ENCODE measurements at regions of chr2 and their contacts with region 1.

Region 1: GRCh38 chr2:68467077-68467960 is at the starts of genes APLF and FBXO48:
- DNase-seq: peak; percentile 90 to 99 (median 99)
- ATAC-seq: peak; percentile 94
- H3K4me3 ChIP-seq: peak within 1 kb of the TSS; percentile 99
- H3K4me3 Mint-ChIP-seq: peak within 1 kb of the TSS; percentile 88 to 99 (median 94)
- H3K27ac ChIP-seq: peak within 1 kb of the TSS; percentile 89
- H3K27ac Mint-ChIP-seq: peak within 1 kb of the TSS; percentile 80 to 97 (median 89)
- H3K4me1 ChIP-seq: peaks cover 7 to 23% of the 10 kb centered on the region in 2 donors
- H3K4me1 Mint-ChIP-seq: peaks cover 10 to 55% (median 39%) of the 10 kb centered on the region in 7 donors
- H3K27me3 ChIP-seq: no peaks in the 10 kb centered on the region
- H3K27me3 Mint-ChIP-seq: no peaks in the 10 kb centered on the region
- total RNA-seq, gene APLF: 2.9 to 8.9 (median 3.8) TPM
- total RNA-seq, gene FBXO48: 1.1 to 5.6 (median 1.7) TPM

Region 2: GRCh38 chr2:68062680-68063387 is 404.5 kb before region 1 on chr2 and contains the start of gene C1D:
- CTCF ChIA-PET with region 1: no interaction called
- POLR2A ChIA-PET with region 1: no interaction called
- intact Hi-C with region 1: loop called in 1 of 2 experiments (anchors 2 kb)
- DNase-seq: peak; percentile 87 to 93 (median 91)
- ATAC-seq: peak; percentile 99
- H3K4me3 ChIP-seq: peak within 1 kb of the TSS; percentile 94
- H3K4me3 Mint-ChIP-seq: peak within 1 kb of the TSS; percentile 84 to 98 (median 96)
- H3K27ac ChIP-seq: peak within 1 kb of the TSS; percentile 97
- H3K27ac Mint-ChIP-seq: peak within 1 kb of the TSS; percentile 94 to 99 (median 98)
- H3K4me1 ChIP-seq: peaks cover 11 to 12% of the 10 kb centered on the region in 2 donors
- H3K4me1 Mint-ChIP-seq: peaks cover 16 to 53% (median 44%) of the 10 kb centered on the region in 7 donors
- H3K27me3 ChIP-seq: no peaks in the 10 kb centered on the region
- H3K27me3 Mint-ChIP-seq: peaks cover 0 to 24% (median 5%) of the 10 kb centered on the region in 5 donors
- total RNA-seq, gene C1D: 13.2 to 24.4 (median 15.7) TPM

Region 3: GRCh38 chr2:68403199-68403644 is 64.1 kb before region 1 on chr2:
- CTCF ChIA-PET with region 1: no interaction called
- POLR2A ChIA-PET with region 1: no interaction called
- intact Hi-C with region 1: no loop called
- DNase-seq: no peak
- ATAC-seq: no peak
- H3K4me3 ChIP-seq: no peak overlapping the region
- H3K4me3 Mint-ChIP-seq: no peak overlapping the region
- H3K27ac ChIP-seq: no peak overlapping the region
- H3K27ac Mint-ChIP-seq: no peak overlapping the region
- H3K4me1 ChIP-seq: peaks cover 0 to 21% of the 10 kb centered on the region in 2 donors
- H3K4me1 Mint-ChIP-seq: peaks cover 0 to 16% (median 0%) of the 10 kb centered on the region in 7 donors
- H3K27me3 ChIP-seq: no peaks in the 10 kb centered on the region
- H3K27me3 Mint-ChIP-seq: peaks cover 7 to 68% (median 30%) of the 10 kb centered on the region in 5 donors

Region 4: GRCh38 chr2:68516051-68516955 is 49.0 kb after region 1 on chr2:
- CTCF ChIA-PET with region 1: no interaction called
- POLR2A ChIA-PET with region 1: interaction called, 4 read pairs
- intact Hi-C with region 1: loop called (anchors 2 kb)
- DNase-seq: peak in 4 of 9 donors; percentile 16 to 46 (median 28)
- ATAC-seq: no peak
- H3K4me3 ChIP-seq: no peak overlapping the region
- H3K4me3 Mint-ChIP-seq: no peak overlapping the region
- H3K27ac ChIP-seq: no peak overlapping the region
- H3K27ac Mint-ChIP-seq: peak overlapping the region in 3 of 9 donors; percentile 11 to 60 (median 59)
- H3K4me1 ChIP-seq: no peaks in the 10 kb centered on the region
- H3K4me1 Mint-ChIP-seq: peaks cover 0 to 10% (median 0%) of the 10 kb centered on the region in 7 donors
- H3K27me3 ChIP-seq: no peaks in the 10 kb centered on the region
- H3K27me3 Mint-ChIP-seq: no peaks in the 10 kb centered on the region

Region 5: DNA sequence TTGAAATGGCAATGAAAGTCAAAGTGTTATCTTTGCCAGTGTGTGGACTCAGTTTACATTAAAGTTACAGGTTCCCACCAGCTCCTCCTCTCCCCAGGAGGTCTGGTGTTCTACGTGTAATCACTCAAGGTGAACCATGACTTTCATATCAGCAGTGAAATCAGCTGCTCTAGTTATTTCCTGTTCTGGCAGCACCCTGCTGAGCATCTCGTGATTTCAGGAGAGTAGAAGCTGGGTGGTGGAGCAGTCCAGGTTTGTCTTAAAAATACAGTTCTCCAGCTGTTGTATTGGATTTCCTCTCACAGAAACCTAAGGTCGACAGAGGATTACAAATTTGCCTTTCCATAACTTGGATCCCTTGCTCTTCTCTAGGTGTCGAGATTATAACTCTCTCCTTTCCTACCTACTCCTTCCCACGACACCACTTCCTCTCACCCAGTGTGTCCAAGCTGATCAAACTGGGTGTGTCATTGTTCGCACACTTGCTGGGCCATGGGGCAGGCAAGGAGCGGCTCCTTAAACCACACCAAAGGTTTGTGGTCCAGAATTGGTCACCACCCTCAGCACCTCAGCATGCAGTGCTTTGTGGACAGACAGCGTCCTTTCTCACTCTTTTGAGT is 254.3 kb after region 1 on chr2:
- CTCF ChIA-PET with region 1: interaction called, 3 read pairs
- POLR2A ChIA-PET with region 1: interaction called, 8 read pairs
- intact Hi-C with region 1: loop called in 1 of 2 experiments (anchors 1 kb)
- DNase-seq: peak in 7 of 9 donors; percentile 52 to 69 (median 61)
- ATAC-seq: peak; percentile 83
- H3K4me3 ChIP-seq: peak overlapping the region; percentile 9
- H3K4me3 Mint-ChIP-seq: peak overlapping the region; percentile 76 to 91 (median 82)
- H3K27ac ChIP-seq: peak overlapping the region; percentile 68
- H3K27ac Mint-ChIP-seq: peak overlapping the region; percentile 78 to 97 (median 95)
- H3K4me1 ChIP-seq: peaks cover 72 to 87% of the 10 kb centered on the region in 2 donors
- H3K4me1 Mint-ChIP-seq: peaks cover 65 to 96% (median 93%) of the 10 kb centered on the region in 7 donors
- H3K27me3 ChIP-seq: no peaks in the 10 kb centered on the region
- H3K27me3 Mint-ChIP-seq: no peaks in the 10 kb centered on the region

Region 6: DNA sequence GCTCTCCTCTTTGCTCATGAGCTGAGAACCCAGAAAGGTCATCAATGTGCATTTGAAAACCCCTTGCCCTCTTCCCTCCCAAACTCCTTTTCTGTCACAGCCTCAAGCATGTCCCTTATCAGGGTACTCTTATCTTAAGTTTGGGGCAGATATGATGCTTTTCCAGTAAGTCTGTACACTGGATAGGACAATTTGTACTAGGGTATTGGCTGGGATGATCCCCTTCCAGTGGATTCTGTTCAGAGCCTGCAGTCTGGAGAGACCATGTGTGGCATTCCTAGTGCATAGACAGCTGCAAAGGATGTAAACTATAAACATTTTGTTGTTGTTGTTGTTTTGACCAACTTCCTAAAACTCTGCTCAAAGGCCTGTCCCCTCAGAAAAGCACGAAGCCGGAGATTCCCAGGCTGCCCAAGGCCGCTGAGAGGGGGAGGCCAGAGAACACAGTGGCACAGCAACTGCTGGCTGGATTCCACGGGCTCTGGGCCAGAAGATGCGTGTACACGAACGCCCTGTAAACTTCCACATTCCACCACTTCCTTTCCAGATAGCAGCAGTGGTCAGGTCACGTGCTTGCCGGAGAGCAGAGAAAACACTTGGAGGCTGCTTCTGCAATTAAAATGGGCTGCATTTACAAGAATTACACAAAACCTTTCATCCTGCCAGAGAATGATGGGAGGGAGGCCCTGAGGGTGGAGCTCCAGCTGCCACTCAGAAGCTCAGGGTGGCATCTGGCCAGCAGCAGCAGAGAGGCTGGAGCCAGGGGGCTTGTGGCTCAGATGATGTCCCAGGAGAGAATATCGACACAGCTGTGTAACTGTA is 361.8 kb after region 1 on chr2:
- CTCF ChIA-PET with region 1: interaction called, 5 read pairs
- POLR2A ChIA-PET with region 1: interaction called, 3 read pairs
- intact Hi-C with region 1: loop called in 1 of 2 experiments (anchors 5 kb)
- DNase-seq: peak; percentile 43 to 87 (median 79)
- ATAC-seq: peak; percentile 76
- H3K4me3 ChIP-seq: peak overlapping the region; percentile 15
- H3K4me3 Mint-ChIP-seq: peak overlapping the region; percentile 67 to 89 (median 78)
- H3K27ac ChIP-seq: peak overlapping the region; percentile 61
- H3K27ac Mint-ChIP-seq: peak overlapping the region; percentile 84 to 98 (median 94)
- H3K4me1 ChIP-seq: peaks cover 32 to 51% of the 10 kb centered on the region in 2 donors
- H3K4me1 Mint-ChIP-seq: peaks cover 59 to 85% (median 71%) of the 10 kb centered on the region in 7 donors
- H3K27me3 ChIP-seq: no peaks in the 10 kb centered on the region
- H3K27me3 Mint-ChIP-seq: no peaks in the 10 kb centered on the region

Region 7: GRCh38 chr2:69306822-69307578 is 839.7 kb after region 1 on chr2:
- CTCF ChIA-PET with region 1: interaction called, 3 read pairs
- POLR2A ChIA-PET with region 1: no interaction called
- intact Hi-C with region 1: loop called in 1 of 2 experiments (anchors 1 kb)
- DNase-seq: peak; percentile 17 to 69 (median 45)
- ATAC-seq: peak; percentile 85
- H3K4me3 ChIP-seq: peak overlapping the region; percentile 69
- H3K4me3 Mint-ChIP-seq: peak overlapping the region; percentile 59 to 82 (median 77)
- H3K27ac ChIP-seq: no peak overlapping the region
- H3K27ac Mint-ChIP-seq: no peak overlapping the region
- H3K4me1 ChIP-seq: peaks cover 0 to 15% of the 10 kb centered on the region in 2 donors
- H3K4me1 Mint-ChIP-seq: peaks cover 9 to 24% (median 17%) of the 10 kb centered on the region in 7 donors
- H3K27me3 ChIP-seq: peaks cover 0 to 7% of the 10 kb centered on the region in 2 donors
- H3K27me3 Mint-ChIP-seq: peaks cover 21 to 59% (median 31%) of the 10 kb centered on the region in 5 donors